Activated naive CD4-positive, alpha-beta T cell treated with anti-CD3 and anti-CD28 coated beads, Interleukin-2, amount 10 ng/mL, durations not matched to agents 7 days and 5 days (primary cell): ENCODE measurements at regions of chr12 and their contacts with region 1.

Region 1: GRCh38 chr12:121793838-121794533 is 498 bp upstream of the RHOF start:
- DNase-seq: peak; percentile 96
- H3K4me3 Mint-ChIP-seq: peak overlapping the region; percentile 92
- H3K27ac Mint-ChIP-seq: peak overlapping the region; percentile 96
- H3K4me1 Mint-ChIP-seq: peaks cover 63% of the 10 kb centered on the region
- H3K27me3 Mint-ChIP-seq: no peaks in the 10 kb centered on the region

Region 2: GRCh38 chr12:121688966-121689365 is 105.0 kb before region 1 on chr12:
- CTCF ChIA-PET with region 1: interaction called, 21 read pairs
- DNase-seq: no peak
- H3K4me3 Mint-ChIP-seq: no peak overlapping the region
- H3K27ac Mint-ChIP-seq: no peak overlapping the region
- H3K4me1 Mint-ChIP-seq: peaks cover 18% of the 10 kb centered on the region
- H3K27me3 Mint-ChIP-seq: peaks cover 20% of the 10 kb centered on the region

Region 3: GRCh38 chr12:121712461-121713256 is 81.3 kb before region 1 on chr12 and contains the start of gene TMEM120B:
- CTCF ChIA-PET with region 1: interaction called, 18 read pairs
- DNase-seq: peak; percentile 87
- H3K4me3 Mint-ChIP-seq: peak within 1 kb of the TSS; percentile 85
- H3K27ac Mint-ChIP-seq: peak within 1 kb of the TSS; percentile 93
- H3K4me1 Mint-ChIP-seq: peaks cover 37% of the 10 kb centered on the region
- H3K27me3 Mint-ChIP-seq: peaks cover 10% of the 10 kb centered on the region

Region 4: DNA sequence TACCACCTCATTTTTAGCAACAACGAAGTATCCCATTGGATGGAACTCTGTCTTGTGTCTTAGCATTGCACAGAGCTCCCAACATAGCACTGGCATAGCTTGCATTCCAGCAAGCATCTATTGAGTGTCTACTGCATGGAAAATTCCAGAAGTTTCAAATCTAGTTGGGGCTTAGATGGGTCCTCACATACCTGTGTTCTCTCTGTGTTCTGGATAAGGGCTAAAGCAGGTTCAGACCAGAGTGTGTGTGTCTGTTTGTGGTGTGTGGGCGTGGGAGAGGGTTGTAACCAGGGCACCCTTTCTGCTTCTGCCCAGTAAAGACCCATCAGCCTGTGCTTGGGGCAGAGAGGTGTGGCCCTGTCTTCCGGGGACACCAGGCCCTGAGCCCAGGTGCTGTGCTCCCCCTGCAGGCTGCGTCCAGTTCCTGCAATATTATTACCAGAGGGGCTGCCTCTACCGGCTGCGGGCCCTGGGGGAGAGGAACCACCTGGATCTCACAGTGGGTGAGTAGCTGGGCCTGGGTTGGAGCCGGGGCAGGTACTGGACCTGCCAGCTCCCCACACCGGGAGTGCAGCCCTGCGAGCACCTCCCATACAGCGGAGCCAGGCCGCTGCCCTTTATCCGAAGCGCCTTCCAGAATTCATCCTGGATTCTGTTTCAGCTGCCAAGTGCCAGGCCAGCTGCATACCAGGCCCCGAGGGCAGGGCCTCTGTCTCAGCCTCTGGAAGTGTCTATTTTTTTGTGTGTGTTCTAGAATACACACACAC is 20.8 kb before region 1 on chr12:
- CTCF ChIA-PET with region 1: interaction called, 300 read pairs
- DNase-seq: peak; percentile 90
- H3K4me3 Mint-ChIP-seq: no peak overlapping the region
- H3K27ac Mint-ChIP-seq: peak overlapping the region; percentile 11
- H3K4me1 Mint-ChIP-seq: peaks cover 25% of the 10 kb centered on the region
- H3K27me3 Mint-ChIP-seq: no peaks in the 10 kb centered on the region

Region 5: DNA sequence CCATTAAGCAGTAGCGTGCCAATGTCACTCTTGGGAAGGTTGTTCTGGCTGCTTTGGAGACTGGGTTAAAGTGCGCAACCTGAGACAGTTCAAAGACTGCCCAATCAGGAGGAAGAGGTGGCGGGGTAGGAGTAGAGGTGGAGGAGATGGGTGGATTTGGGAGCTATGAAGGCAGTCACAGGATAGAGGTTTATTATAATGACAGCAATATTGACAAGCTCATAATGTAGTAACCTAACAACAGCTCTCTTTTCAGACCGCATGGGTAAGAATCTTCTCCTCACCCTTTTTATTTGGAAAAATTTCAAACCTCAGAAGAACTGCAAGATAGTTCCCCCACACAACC is 89.3 kb after region 1 on chr12:
- CTCF ChIA-PET with region 1: interaction called, 76 read pairs
- DNase-seq: no peak
- H3K4me3 Mint-ChIP-seq: no peak overlapping the region
- H3K27ac Mint-ChIP-seq: no peak overlapping the region
- H3K4me1 Mint-ChIP-seq: peaks cover 9% of the 10 kb centered on the region
- H3K27me3 Mint-ChIP-seq: peaks cover 24% of the 10 kb centered on the region

Region 6: GRCh38 chr12:121894633-121895032 is 100.6 kb after region 1 on chr12:
- CTCF ChIA-PET with region 1: interaction called, 76 read pairs
- DNase-seq: no peak
- H3K4me3 Mint-ChIP-seq: no peak overlapping the region
- H3K27ac Mint-ChIP-seq: peak overlapping the region; percentile 92
- H3K4me1 Mint-ChIP-seq: peaks cover 39% of the 10 kb centered on the region
- H3K27me3 Mint-ChIP-seq: no peaks in the 10 kb centered on the region

Region 7: DNA sequence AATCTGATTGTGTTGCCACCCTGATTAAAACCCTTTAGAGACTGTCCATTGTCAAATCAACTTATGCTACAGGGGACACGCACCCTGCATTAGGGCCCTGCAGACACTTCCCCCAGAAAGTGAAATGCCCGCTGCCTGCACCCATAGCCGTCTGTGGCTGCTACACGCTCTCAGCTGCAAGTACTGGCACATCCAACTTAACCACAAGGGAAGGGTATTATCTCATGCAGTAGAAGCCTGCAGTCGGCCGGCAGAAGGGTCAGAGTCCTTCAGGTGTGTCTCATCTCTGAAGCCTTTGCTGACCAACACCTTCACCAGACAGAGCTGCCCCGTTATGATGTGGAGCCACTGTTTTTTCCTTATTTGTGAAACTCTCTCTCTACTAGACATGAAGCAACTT is 145.2 kb after region 1 on chr12:
- CTCF ChIA-PET with region 1: no interaction called
- DNase-seq: no peak
- H3K4me3 Mint-ChIP-seq: no peak overlapping the region
- H3K27ac Mint-ChIP-seq: no peak overlapping the region
- H3K4me1 Mint-ChIP-seq: peaks cover 13% of the 10 kb centered on the region
- H3K27me3 Mint-ChIP-seq: peaks cover 7% of the 10 kb centered on the region

Region 8: GRCh38 chr12:121964813-121965643 is 171.0 kb after region 1 on chr12:
- CTCF ChIA-PET with region 1: no interaction called
- DNase-seq: no peak
- H3K4me3 Mint-ChIP-seq: no peak overlapping the region
- H3K27ac Mint-ChIP-seq: no peak overlapping the region
- H3K4me1 Mint-ChIP-seq: peaks cover 6% of the 10 kb centered on the region
- H3K27me3 Mint-ChIP-seq: peaks cover 5% of the 10 kb centered on the region